ENCODE measurements at regions of chr9 and their contacts with region 1.

Region 1: GRCh38 chr9:6353851-6354686 is 25.9 kb downstream of the TPD52L3 start:
- DNase-seq: peak; percentile 27
- ATAC-seq: peak; percentile 89
- H3K4me3 Mint-ChIP-seq: no peak overlapping the region
- H3K27ac Mint-ChIP-seq: peak overlapping the region; percentile 37
- H3K4me1 Mint-ChIP-seq: peaks cover 18% of the 10 kb centered on the region
- H3K27me3 Mint-ChIP-seq: peaks cover 4% of the 10 kb centered on the region

Region 2: DNA sequence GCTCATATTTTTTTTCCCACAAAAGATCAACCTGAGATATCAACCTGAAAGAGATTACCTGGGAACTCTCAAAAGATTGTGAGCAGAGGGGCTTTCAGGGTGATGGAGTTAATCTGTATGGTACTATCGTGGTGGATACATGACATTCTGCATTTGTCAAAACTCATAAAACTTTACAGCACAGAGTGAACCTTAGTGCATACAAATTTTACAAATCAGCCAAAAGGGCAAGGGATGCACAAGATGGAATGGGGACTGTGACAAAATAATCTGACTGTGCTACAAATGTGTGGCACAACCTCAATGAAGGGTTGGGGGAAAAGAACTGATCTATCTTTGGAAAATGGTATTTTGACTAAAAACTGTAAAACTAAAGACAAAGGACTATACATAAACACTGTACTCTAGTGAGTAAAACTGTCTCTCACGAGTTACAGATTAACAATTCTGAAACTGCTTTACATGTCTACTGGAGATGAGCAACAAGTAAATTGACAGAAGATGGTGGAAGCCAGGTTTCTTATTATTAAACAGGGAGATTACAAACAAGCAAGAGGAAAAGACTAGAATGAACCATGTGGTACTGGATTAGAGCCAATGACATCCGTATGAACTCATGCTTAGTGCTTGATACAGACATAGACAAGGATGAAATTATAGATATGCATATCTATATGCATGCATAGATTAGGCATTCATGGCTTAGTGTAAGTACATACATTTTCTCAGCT is 989.6 kb before region 1 on chr9:
- CTCF ChIA-PET with region 1: no interaction called
- POLR2A ChIA-PET with region 1: no interaction called
- intact Hi-C with region 1: no loop called
- DNase-seq: no peak
- ATAC-seq: peak; percentile 97
- H3K4me3 Mint-ChIP-seq: no peak overlapping the region
- H3K27ac Mint-ChIP-seq: peak overlapping the region; percentile 44
- H3K4me1 Mint-ChIP-seq: peaks cover 17% of the 10 kb centered on the region
- H3K27me3 Mint-ChIP-seq: no peaks in the 10 kb centered on the region

Region 3: GRCh38 chr9:6490863-6491262 is 136.8 kb after region 1 on chr9:
- CTCF ChIA-PET with region 1: interaction called, 8 read pairs
- POLR2A ChIA-PET with region 1: no interaction called
- intact Hi-C with region 1: loop called (anchors 5 to 10 kb)
- DNase-seq: no peak
- ATAC-seq: no peak
- H3K4me3 Mint-ChIP-seq: no peak overlapping the region
- H3K27ac Mint-ChIP-seq: no peak overlapping the region
- H3K4me1 Mint-ChIP-seq: peaks cover 7% of the 10 kb centered on the region
- H3K27me3 Mint-ChIP-seq: no peaks in the 10 kb centered on the region

Region 4: DNA sequence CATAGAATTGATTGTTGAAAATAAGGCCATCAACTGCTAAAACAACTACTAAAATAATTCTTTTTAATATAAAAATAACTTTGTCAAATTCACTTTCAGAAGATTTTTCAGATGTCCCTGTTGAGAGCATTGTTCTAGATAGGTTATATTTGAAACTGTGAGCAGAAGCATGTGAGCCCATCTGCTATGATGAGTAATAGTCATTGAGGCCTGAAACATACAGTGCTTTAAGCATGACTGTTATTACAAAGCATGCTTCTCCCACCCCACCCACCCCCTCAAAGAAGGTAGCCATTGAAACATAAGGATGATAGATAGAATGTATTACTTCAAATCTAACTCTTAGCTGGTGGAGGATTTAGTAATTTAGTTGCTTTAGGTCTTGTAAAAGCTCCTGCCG is 144.9 kb after region 1 on chr9:
- CTCF ChIA-PET with region 1: no interaction called
- POLR2A ChIA-PET with region 1: no interaction called
- intact Hi-C with region 1: loop called (anchors 5 to 10 kb)
- DNase-seq: no peak
- ATAC-seq: peak; percentile 58
- H3K4me3 Mint-ChIP-seq: no peak overlapping the region
- H3K27ac Mint-ChIP-seq: peak overlapping the region; percentile 59
- H3K4me1 Mint-ChIP-seq: peaks cover 5% of the 10 kb centered on the region
- H3K27me3 Mint-ChIP-seq: no peaks in the 10 kb centered on the region

Region 5: GRCh38 chr9:6535594-6535993 is 181.5 kb after region 1 on chr9:
- CTCF ChIA-PET with region 1: no interaction called
- POLR2A ChIA-PET with region 1: no interaction called
- intact Hi-C with region 1: no loop called
- DNase-seq: no peak
- ATAC-seq: no peak
- H3K4me3 Mint-ChIP-seq: no peak overlapping the region
- H3K27ac Mint-ChIP-seq: no peak overlapping the region
- H3K4me1 Mint-ChIP-seq: peaks cover 5% of the 10 kb centered on the region
- H3K27me3 Mint-ChIP-seq: peaks cover 5% of the 10 kb centered on the region

Region 6: DNA sequence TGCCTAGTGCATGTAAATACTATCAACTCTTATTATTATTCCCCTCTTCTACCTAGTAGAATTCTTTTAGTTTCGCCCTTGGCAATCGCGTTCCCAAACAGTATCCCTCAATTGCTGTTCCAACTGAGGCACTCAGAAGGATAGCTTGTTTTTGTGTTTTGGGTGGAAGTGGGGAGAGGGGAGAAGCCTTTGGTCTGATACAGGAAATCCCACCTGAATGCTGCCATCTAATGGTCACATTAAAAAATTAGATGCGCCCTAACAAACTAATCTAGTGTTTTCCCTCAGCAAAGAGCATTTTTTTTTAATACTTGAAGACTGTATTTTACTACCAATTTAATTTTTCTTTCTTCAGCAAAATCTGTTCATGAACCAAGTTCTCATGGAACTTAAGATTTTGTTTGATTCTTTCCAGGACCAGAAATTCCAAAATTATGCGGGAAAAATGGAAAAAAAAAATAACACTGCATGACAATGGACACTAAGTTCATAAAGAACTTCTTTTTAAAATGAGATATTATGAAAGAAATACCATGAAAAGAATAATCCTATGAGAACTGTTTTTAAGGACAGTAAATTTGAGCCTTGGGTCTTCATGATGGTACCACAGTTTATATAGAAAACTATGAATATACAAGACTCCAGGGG is 313.7 kb after region 1 on chr9:
- CTCF ChIA-PET with region 1: interaction called, 5 read pairs
- POLR2A ChIA-PET with region 1: no interaction called
- intact Hi-C with region 1: loop called (anchors 1 to 2 kb)
- DNase-seq: no peak
- ATAC-seq: no peak
- H3K4me3 Mint-ChIP-seq: no peak overlapping the region
- H3K27ac Mint-ChIP-seq: no peak overlapping the region
- H3K4me1 Mint-ChIP-seq: no peaks in the 10 kb centered on the region
- H3K27me3 Mint-ChIP-seq: no peaks in the 10 kb centered on the region